Mammary epithelial cell (primary cell): ENCODE measurements at regions of chr9 and their contacts with region 1.

Region 1: DNA sequence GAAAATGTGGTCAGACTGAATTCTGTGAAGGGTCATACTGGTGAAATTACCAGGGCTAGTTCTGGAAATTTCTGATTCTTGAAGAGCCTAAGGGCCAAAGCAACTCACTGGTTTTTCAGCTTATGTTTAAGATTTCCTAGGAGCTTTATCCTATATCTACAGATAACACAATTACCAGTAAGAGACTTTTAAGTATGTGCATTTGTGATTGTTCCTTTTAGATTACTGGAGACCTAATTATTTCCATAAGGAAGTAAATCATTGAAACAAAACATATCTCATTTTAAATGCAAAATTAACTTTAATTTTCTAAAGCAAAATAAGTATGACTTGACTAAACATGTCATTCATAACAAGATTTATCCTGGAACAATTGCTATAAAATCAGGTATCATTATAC is 134.2 kb downstream of the MPDZ start:
- DNase-seq: no peak
- H3K4me3 ChIP-seq: no peak overlapping the region
- H3K27ac ChIP-seq: no peak overlapping the region
- H3K4me1 ChIP-seq: no peaks in the 10 kb centered on the region
- H3K27me3 ChIP-seq: no peaks in the 10 kb centered on the region
- CTCF ChIP-seq: no peak

Region 2: DNA sequence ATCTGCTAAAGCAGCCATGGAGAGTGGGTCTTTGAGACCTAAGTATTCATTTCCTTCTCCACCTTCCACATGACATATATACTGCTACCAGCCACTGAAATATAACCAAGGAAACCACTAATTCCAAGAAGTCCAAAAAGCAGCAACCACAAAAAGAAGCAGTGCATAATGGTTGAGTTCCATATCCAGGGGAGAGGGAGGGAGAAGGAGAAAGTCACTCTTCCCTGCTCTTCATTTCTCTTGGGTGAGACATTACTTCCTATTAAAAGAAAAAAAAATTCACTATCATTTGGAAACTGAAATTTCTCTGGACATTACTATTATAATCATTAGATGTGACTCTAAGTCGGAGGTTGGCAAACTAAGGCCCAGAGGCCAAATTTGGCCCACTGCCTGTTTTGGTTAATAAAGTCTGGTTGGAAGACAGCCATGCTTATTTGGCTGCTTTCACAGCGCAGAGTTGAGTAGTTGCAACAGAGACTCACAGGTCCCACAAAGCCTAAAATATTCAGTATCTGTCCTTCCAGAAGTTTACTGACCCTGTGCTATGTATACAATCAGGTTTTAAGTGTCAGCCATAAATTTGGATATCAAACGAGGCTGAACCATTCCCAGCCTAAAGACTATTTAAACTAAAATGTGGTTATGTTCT is 34.4 kb before region 1 on chr9:
- CTCF ChIA-PET with region 1: no interaction called
- dilution Hi-C with region 1: no loop called
- in situ Hi-C with region 1: no loop called
- intact Hi-C with region 1: loop called (anchors 1 kb)
- DNase-seq: no peak
- H3K4me3 ChIP-seq: no peak overlapping the region
- H3K27ac ChIP-seq: no peak overlapping the region
- H3K4me1 ChIP-seq: no peaks in the 10 kb centered on the region
- H3K27me3 ChIP-seq: no peaks in the 10 kb centered on the region
- CTCF ChIP-seq: no peak

Region 3: GRCh38 chr9:13209498-13209897 is 64.2 kb after region 1 on chr9:
- CTCF ChIA-PET with region 1: no interaction called
- dilution Hi-C with region 1: no loop called
- in situ Hi-C with region 1: no loop called
- intact Hi-C with region 1: no loop called
- DNase-seq: no peak
- H3K4me3 ChIP-seq: no peak overlapping the region
- H3K27ac ChIP-seq: no peak overlapping the region
- H3K4me1 ChIP-seq: no peaks in the 10 kb centered on the region
- H3K27me3 ChIP-seq: no peaks in the 10 kb centered on the region
- CTCF ChIP-seq: no peak